ENCODE measurements at regions of chr11 and their contacts with region 1.

Region 1: DNA sequence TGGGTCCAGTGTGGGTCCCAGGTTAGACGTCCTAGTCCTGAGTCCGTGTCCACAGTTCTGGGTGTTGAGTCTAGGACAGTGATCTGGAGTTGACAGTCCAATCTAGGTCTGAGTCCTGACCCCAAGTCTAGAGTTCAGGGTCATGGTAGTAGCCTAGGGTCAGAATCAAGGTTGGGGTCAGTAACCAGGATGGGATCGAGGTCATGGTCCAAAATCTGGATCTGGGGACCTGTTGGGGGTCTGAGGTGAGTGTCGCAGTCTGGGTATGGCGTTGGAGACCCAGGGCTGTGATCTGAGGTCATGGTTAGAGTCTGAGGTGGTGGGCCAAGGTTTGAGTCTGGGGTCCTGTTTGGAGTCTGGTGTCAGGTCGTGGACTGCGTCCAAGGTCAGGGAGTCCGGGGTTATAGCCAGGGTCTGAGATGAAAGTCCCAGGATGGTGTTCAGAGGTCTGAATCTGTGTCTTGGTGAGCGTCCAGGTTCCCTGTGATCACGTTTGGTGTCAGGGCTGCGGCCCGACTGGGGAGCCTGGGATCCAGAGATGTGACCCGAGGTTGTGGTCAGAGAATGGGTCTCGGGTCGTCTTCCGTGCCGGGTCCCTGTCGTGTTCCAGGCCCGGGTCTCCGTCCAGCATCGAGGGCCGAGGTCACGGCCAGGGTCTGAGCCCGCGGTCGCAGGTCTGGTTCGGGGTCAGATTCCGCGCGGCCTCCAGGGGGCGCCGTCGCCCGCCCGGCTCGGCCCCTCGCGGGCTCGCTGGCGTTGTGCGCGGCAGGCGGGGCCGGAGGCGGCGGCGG is 445 bp upstream of the GRK2 start:
- DNase-seq: peak; percentile 81
- H3K4me3 Mint-ChIP-seq: peak overlapping the region; percentile 72
- H3K27ac Mint-ChIP-seq: peak overlapping the region; percentile 87
- H3K4me1 Mint-ChIP-seq: peaks cover 72% of the 10 kb centered on the region
- H3K27me3 Mint-ChIP-seq: no peaks in the 10 kb centered on the region

Region 2: DNA sequence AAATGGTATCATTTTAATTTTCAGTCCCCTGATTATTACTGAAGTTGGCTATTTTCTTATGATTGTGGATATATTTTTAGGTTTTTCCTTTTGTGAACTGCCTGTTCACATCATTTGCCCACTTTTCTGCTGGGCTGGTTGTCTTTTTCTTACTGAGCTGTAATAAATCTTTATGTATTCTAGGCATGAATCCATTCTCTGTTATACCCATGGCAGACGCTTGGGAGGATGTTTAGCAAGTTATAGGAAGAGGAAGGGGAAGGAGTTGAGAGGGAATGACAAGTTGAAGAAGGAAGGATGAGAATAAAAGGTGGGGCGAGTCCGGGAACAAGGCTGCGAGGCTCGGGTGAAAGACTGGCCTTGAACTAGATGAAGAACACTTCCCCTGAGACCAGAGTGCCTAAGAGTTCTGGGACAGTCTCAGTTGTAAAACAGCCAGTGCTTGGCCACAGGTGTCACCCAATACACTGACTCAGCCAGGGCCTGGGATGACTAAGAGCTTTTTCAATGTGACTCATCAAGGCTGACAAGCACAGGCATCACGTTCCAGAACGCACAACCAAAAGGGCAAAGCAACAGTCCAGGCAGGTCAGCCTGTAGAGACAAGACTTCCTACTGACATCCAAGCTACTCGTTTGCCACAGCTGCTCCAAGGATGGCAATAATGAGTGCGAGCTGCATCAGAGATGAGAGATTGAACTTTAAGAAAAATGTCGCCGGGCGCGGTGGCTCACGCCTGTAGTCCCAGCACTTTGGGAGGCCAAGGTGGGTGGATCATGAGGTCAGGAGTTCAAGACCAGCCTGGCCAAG is 373.8 kb before region 1 on chr11:
- CTCF ChIA-PET with region 1: no interaction called
- intact Hi-C with region 1: no loop called
- DNase-seq: peak; percentile 80
- H3K4me3 Mint-ChIP-seq: no peak overlapping the region
- H3K27ac Mint-ChIP-seq: no peak overlapping the region
- H3K4me1 Mint-ChIP-seq: peaks cover 8% of the 10 kb centered on the region
- H3K27me3 Mint-ChIP-seq: no peaks in the 10 kb centered on the region

Region 3: GRCh38 chr11:67082035-67082791 is 183.6 kb before region 1 on chr11:
- CTCF ChIA-PET with region 1: interaction called, 11 read pairs
- intact Hi-C with region 1: loop called (anchors 5 kb)
- DNase-seq: peak; percentile 41
- H3K4me3 Mint-ChIP-seq: peak overlapping the region; percentile 47
- H3K27ac Mint-ChIP-seq: no peak overlapping the region
- H3K4me1 Mint-ChIP-seq: peaks cover 19% of the 10 kb centered on the region
- H3K27me3 Mint-ChIP-seq: peaks cover 4% of the 10 kb centered on the region

Region 4: GRCh38 chr11:67252831-67253239 is 13.0 kb before region 1 on chr11:
- CTCF ChIA-PET with region 1: interaction called, 27 read pairs
- intact Hi-C with region 1: no loop called
- DNase-seq: peak; percentile 44
- H3K4me3 Mint-ChIP-seq: no peak overlapping the region
- H3K27ac Mint-ChIP-seq: peak overlapping the region; percentile 28
- H3K4me1 Mint-ChIP-seq: peaks cover 13% of the 10 kb centered on the region
- H3K27me3 Mint-ChIP-seq: no peaks in the 10 kb centered on the region

Region 5: DNA sequence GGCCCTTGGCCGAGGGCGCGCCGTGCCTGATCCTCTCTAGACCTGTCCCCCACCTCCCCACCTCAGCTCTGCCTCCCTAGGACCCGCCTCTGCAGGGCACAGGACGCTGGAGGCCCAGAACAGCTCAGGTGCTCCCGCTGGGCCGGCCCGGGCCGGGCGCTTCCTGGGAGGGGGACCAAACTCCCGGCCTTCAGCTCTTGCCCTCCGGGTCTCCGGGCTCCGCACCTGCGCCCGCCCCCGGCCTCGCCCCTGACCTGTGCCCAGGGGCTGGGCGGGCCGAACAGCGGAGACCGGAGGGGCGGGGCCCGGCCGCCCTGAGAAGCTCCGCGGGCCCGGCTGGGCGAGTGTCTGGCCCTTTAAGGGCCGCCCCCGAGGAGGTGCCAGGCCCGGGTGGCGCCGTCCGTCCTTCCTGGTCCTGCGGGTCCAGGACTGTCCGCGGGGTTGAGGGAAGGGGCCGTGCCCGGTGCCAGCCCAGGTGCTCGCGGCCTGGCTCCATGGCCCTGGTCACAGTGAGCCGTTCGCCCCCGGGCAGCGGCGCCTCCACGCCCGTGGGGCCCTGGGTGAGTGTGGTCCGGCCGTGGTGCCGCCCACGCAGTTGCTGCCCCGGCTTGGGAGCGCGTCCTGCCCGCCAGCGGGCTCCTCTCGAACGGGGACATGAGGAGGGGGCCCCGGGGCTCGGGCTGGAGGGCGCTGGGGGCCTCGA is 37.5 kb after region 1 on chr11 and contains the start of gene SSH3:
- CTCF ChIA-PET with region 1: interaction called, 11 read pairs
- intact Hi-C with region 1: no loop called
- DNase-seq: no peak
- H3K4me3 Mint-ChIP-seq: peak within 1 kb of the TSS; percentile 57
- H3K27ac Mint-ChIP-seq: no peak within 1 kb of the TSS
- H3K4me1 Mint-ChIP-seq: peaks cover 5% of the 10 kb centered on the region
- H3K27me3 Mint-ChIP-seq: no peaks in the 10 kb centered on the region
- total RNA-seq, gene SSH3: 4.1 to 5.4 TPM

Region 6: GRCh38 chr11:67353317-67354074 is 87.7 kb after region 1 on chr11 and contains the start of gene POLD4:
- CTCF ChIA-PET with region 1: interaction called, 19 read pairs
- intact Hi-C with region 1: no loop called
- DNase-seq: peak; percentile 97
- H3K4me3 Mint-ChIP-seq: peak within 1 kb of the TSS; percentile 92
- H3K27ac Mint-ChIP-seq: peak within 1 kb of the TSS; percentile 97
- H3K4me1 Mint-ChIP-seq: peaks cover 54% of the 10 kb centered on the region
- H3K27me3 Mint-ChIP-seq: no peaks in the 10 kb centered on the region
- total RNA-seq, gene POLD4: 40.7 to 42.0 TPM

Region 7: GRCh38 chr11:67482825-67483798 is 217.3 kb after region 1 on chr11 and contains the start of gene AIP:
- CTCF ChIA-PET with region 1: no interaction called
- intact Hi-C with region 1: loop called (anchors 1 kb)
- DNase-seq: peak; percentile 99
- H3K4me3 Mint-ChIP-seq: peak within 1 kb of the TSS; percentile 94
- H3K27ac Mint-ChIP-seq: peak within 1 kb of the TSS; percentile 99
- H3K4me1 Mint-ChIP-seq: peaks cover 34% of the 10 kb centered on the region
- H3K27me3 Mint-ChIP-seq: no peaks in the 10 kb centered on the region
- total RNA-seq, gene AIP: 163 to 166 TPM

Measured in activated naive CD4-positive, alpha-beta T cell treated with anti-CD3 and anti-CD28 coated beads for 36 hours (primary cell).